OCI-LY7 (cell line): ENCODE measurements at regions of chr1 and their contacts with region 1.

Region 1: DNA sequence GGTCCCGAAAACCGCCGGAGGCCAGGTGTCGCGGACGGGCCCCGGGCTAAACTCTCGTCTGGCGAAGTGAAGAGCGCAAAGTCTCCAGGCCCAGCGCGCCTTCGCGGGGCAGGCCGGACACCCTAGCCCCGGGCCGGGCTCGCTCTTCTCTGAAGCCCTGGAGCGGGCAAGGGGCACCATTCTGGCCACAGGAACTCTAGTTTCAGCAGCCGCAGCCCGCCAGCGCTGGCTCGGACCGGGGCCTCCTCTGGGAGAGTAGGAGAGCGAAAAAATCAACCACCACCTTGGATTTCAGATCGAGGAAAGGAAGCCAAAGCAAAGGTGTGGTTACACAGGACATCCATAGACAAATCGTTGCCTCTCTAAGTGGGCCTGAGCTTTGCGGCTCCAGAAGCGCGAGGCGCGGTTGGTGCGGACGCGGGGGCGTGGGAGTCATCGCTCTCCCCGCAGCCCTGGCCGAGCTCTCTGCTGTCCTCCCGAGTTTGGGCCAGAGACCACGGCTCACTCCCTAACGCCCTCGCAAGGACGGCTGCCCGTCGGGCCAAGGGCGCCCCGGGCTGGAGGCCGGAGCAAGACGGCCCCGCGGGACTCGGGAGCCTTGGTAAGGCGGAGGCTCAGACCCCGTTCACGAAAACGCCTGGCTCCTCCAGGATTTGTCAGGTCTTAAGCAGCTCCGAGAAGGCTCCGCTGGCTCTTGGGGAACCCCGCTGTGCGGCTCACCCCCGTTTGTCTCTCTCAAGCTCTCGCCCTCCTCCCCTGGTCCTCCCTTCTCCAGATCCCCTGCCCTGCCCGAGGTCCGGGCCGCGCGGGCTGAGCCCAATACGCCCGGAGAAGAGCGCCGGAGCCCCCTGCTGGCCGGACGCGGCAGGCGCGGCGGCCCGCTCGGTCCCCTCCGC is 132.9 kb upstream of the DPYD start:
- DNase-seq: peak; percentile 14
- H3K4me3 ChIP-seq: no peak overlapping the region
- H3K27ac ChIP-seq: no peak overlapping the region
- H3K4me1 ChIP-seq: no peaks in the 10 kb centered on the region
- CTCF ChIP-seq: peak; percentile 80

Region 2: GRCh38 chr1:96966536-96967138 is 1087.1 kb before region 1 on chr1:
- CTCF ChIA-PET with region 1: no interaction called
- POLR2A ChIA-PET with region 1: no interaction called
- intact Hi-C with region 1: loop called (anchors 1 kb)
- DNase-seq: peak; percentile 51
- H3K4me3 ChIP-seq: no peak overlapping the region
- H3K27ac ChIP-seq: no peak overlapping the region
- H3K4me1 ChIP-seq: no peaks in the 10 kb centered on the region
- CTCF ChIP-seq: peak; percentile 87

Region 3: DNA sequence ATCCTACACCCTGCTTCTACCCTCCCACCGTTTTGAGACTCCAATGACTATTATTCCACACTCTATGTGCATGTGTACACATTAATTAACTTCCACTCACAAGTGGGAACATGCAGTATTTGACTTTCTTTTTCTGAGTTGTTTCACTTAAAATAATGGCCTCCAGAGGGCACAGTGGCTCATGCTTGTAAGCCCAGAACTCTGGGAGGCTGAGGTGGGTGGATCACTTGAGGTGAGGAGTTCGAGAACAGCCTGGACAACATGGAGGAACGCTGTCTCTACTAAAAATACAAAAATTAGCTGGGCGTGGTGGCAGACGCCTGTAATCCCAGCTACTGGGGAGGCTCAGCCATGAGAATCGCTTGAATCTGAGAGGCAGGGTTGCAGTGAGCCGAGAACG is 867.3 kb before region 1 on chr1:
- CTCF ChIA-PET with region 1: no interaction called
- POLR2A ChIA-PET with region 1: no interaction called
- intact Hi-C with region 1: loop called (anchors 10 kb)
- DNase-seq: peak; percentile 24
- H3K4me3 ChIP-seq: no peak overlapping the region
- H3K27ac ChIP-seq: no peak overlapping the region
- H3K4me1 ChIP-seq: no peaks in the 10 kb centered on the region
- CTCF ChIP-seq: peak; percentile 67

Region 4: GRCh38 chr1:97524211-97524610 is 529.5 kb before region 1 on chr1:
- CTCF ChIA-PET with region 1: no interaction called
- POLR2A ChIA-PET with region 1: no interaction called
- intact Hi-C with region 1: loop called (anchors 10 kb)
- DNase-seq: no peak
- H3K4me3 ChIP-seq: no peak overlapping the region
- H3K27ac ChIP-seq: no peak overlapping the region
- H3K4me1 ChIP-seq: no peaks in the 10 kb centered on the region
- CTCF ChIP-seq: no peak

Region 5: DNA sequence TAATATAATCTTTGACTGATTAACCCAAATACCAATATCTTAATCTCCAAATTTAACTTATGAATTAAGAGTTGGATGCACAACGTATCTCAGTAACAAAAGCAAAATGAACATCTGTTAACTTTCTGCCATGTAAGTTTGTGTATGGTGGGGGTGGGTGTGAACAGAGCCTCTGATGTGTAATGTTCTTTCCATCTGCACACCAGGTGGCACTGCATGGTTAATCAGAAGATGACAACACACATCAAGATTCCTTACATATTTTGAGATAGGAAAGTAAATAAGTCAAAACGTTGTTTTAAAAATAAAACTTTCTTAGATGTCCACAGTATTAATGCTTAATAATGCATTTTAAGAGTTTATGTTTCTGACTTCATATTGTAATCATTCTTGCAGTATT is 384.8 kb before region 1 on chr1:
- CTCF ChIA-PET with region 1: no interaction called
- POLR2A ChIA-PET with region 1: no interaction called
- intact Hi-C with region 1: loop called (anchors 2 kb)
- DNase-seq: no peak
- H3K4me3 ChIP-seq: no peak overlapping the region
- H3K27ac ChIP-seq: no peak overlapping the region
- H3K4me1 ChIP-seq: no peaks in the 10 kb centered on the region
- CTCF ChIP-seq: peak; percentile 47; the same call in 1 of the 2 replicates

Region 6: DNA sequence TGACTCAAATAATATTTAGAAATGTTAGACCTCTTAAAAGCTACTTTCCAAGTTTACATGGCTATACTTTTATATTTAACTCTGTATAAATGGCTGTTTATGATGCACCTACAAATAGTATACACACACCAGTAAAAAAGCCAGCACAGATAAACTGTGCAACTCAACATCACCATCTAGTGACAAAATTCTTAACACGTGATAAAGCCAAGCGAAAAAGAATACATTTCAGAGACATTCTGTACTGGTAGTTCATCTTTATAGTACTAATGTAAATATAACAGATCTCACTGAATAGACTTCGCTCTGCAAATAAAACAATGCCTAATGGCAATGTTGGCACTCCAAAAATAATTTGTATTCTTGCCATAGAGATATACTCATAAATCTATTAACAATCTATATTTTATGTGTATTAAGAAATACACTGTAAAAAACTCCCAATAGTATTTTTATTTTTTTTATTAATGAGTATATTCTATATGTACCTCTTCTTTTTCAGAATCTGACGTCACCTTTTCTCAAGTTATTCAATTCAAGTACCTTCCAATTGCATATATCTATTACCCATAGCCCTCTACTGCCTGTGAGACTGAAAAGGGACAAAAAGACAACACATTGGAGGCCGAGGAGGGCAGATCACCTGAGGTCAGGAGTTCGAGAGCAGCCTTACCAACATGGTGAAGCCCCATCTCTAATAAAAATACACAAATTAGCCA is 233.1 kb before region 1 on chr1:
- CTCF ChIA-PET with region 1: no interaction called
- POLR2A ChIA-PET with region 1: no interaction called
- intact Hi-C with region 1: loop called (anchors 10 kb)
- DNase-seq: peak; percentile 37
- H3K4me3 ChIP-seq: no peak overlapping the region
- H3K27ac ChIP-seq: no peak overlapping the region
- H3K4me1 ChIP-seq: no peaks in the 10 kb centered on the region
- CTCF ChIP-seq: peak; percentile 76